Activated CD4-positive, alpha-beta T cell treated with anti-CD3 and anti-CD28 coated beads for 36 hours (primary cell): ENCODE measurements at regions of chr7 and their contacts with region 1.

Region 1: GRCh38 chr7:50293509-50294179 is 10.9 kb upstream of the IKZF1 start:
- DNase-seq: no peak
- ATAC-seq: no peak
- H3K4me3 Mint-ChIP-seq: no peak overlapping the region
- H3K27ac Mint-ChIP-seq: no peak overlapping the region
- H3K4me1 Mint-ChIP-seq: peaks cover 32% of the 10 kb centered on the region
- H3K27me3 Mint-ChIP-seq: no peaks in the 10 kb centered on the region

Region 2: GRCh38 chr7:50272808-50273207 is 20.8 kb before region 1 on chr7:
- CTCF ChIA-PET with region 1: interaction called, 13 read pairs
- POLR2A ChIA-PET with region 1: interaction called, 3 read pairs
- intact Hi-C with region 1: loop called in 1 of 2 experiments (anchors 2 kb)
- DNase-seq: no peak
- ATAC-seq: no peak
- H3K4me3 Mint-ChIP-seq: no peak overlapping the region
- H3K27ac Mint-ChIP-seq: no peak overlapping the region
- H3K4me1 Mint-ChIP-seq: peaks cover 67% of the 10 kb centered on the region
- H3K27me3 Mint-ChIP-seq: no peaks in the 10 kb centered on the region

Region 3: DNA sequence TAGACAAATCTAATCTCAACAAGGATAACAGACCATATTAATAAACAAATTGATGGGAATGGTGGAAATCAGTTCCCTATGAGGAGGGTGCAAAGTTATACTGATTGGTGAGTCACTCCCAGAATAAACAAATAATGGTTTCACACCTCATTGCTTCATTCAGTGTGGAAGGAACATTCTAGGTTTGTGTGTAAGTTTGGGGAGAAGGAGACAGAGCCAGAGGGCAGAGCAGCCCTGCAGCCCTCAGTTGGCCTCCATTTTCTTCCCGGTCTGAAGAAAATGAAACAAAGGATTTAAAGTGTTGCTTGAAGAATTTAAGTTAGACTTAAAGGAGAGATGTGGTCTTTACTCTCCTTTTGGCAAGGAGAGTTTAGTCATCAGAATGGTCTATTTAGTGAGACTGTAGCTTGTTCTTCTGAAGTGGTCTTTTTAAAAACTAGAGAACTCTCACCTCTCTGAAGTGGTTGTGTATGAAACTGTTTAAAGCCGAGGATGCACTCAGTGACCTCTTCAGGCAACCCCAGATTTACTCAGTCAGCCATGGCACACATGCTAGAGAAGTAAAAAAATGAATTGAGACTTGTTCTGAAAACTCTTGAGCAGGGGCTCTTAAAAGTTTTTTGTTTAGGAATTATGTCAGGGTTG is 38.0 kb after region 1 on chr7:
- CTCF ChIA-PET with region 1: no interaction called
- POLR2A ChIA-PET with region 1: no interaction called
- intact Hi-C with region 1: no loop called
- DNase-seq: peak; percentile 69
- ATAC-seq: peak; percentile 75
- H3K4me3 Mint-ChIP-seq: no peak overlapping the region
- H3K27ac Mint-ChIP-seq: no peak overlapping the region
- H3K4me1 Mint-ChIP-seq: peaks cover 23% of the 10 kb centered on the region
- H3K27me3 Mint-ChIP-seq: no peaks in the 10 kb centered on the region